Panc1 (cell line): ENCODE measurements at regions of chr12 and their contacts with region 1.

Region 1: GRCh38 chr12:68028647-68029046 is 39.4 kb downstream of the IFNG-AS1 start:
- DNase-seq: no peak
- ATAC-seq: no peak
- H3K4me3 ChIP-seq: no peak overlapping the region
- H3K27ac ChIP-seq: no peak overlapping the region
- H3K4me1 ChIP-seq: no peaks in the 10 kb centered on the region
- H3K27me3 ChIP-seq: no peaks in the 10 kb centered on the region; the same call in 1 of the 2 replicates
- CTCF ChIP-seq: no peak

Region 2: DNA sequence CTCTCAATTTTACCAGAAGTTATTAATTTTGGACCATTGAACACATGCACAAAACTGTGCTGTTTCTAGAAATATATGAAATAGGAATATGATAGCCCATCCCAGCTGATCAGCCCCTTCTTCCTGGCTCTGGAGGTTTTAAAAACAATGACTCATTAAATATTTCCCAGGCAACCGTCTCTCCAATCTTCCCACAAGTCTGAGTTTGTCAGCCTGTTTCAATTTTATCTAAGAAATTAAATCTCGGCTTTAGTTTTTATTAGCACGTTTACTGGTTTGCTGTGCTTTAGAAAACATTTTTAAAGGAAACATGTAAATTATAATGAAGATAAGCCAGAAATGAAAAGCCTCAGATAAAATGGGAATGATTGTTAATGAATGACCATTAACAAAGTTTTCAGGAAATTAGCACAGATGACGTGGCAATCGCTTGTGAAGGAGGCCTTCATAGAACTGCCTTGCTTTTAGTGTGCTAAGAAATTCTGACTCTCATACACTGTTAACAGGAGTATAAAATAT is 492.7 kb after region 1 on chr12:
- CTCF ChIA-PET with region 1: no interaction called
- POLR2A ChIA-PET with region 1: no interaction called
- in situ Hi-C with region 1: no loop called
- intact Hi-C with region 1: no loop called
- DNase-seq: no peak
- ATAC-seq: peak; percentile 87
- H3K4me3 ChIP-seq: peak overlapping the region in 1 of 2 experiments; percentile 4; a peak in 2 of 4 replicates
- H3K27ac ChIP-seq: peak overlapping the region; percentile 97
- H3K4me1 ChIP-seq: peaks cover 34% of the 10 kb centered on the region
- H3K27me3 ChIP-seq: no peaks in the 10 kb centered on the region
- CTCF ChIP-seq: no peak

Region 3: DNA sequence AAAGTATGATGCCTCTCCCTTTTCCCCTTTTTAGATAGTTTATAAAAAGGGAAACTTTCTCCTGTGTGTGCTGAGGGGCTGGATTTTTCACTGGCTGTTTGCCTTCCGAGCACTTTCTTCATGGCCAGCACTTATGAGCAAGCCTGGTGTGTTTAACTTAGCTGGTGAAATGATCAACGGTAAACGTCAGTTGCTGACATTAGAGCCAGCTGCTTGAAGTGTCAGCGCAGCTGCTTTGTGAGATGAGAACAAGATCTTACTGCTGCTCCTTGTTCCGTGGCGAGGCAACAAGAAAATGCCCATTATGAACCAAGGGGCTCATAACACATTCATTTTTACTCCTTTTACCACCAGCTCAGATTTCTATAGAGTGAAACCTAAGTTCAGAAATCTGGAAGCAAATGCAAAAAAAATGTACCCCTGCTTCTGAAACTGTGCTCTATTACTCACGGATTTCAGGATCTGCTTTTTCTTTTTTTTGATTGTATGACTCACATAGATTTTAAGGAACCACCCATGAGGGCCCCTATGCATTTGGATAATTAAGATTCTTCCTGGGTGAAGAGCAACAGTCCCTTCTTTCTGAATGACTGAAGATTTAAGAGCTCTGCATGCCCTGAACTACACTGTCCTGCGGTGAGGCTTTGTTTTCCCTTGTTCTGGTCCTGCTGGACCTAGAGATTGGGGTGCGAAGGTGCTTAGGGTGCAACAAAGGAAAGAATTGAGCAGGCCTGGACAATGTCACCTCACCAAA is 978.6 kb after region 1 on chr12:
- CTCF ChIA-PET with region 1: no interaction called
- POLR2A ChIA-PET with region 1: interaction called, 11 read pairs
- in situ Hi-C with region 1: no loop called
- intact Hi-C with region 1: no loop called
- DNase-seq: no peak
- ATAC-seq: peak; percentile 51; the same call in 1 of the 2 replicates
- H3K4me3 ChIP-seq: no peak overlapping the region
- H3K27ac ChIP-seq: no peak overlapping the region
- H3K4me1 ChIP-seq: peaks cover 6% of the 10 kb centered on the region
- H3K27me3 ChIP-seq: no peaks in the 10 kb centered on the region
- CTCF ChIP-seq: no peak